PC-9 (cell line): ENCODE measurements at regions of chr22 and their contacts with region 1.

Region 1: GRCh38 chr22:36552289-36552688 is 23.3 kb upstream of the EIF3D start:
- DNase-seq: no peak
- H3K4me3 ChIP-seq: no peak overlapping the region
- H3K27ac ChIP-seq: no peak overlapping the region
- H3K4me1 ChIP-seq: peaks cover 4% of the 10 kb centered on the region
- H3K27me3 ChIP-seq: peaks cover 20% of the 10 kb centered on the region
- CTCF ChIP-seq: no peak

Region 2: DNA sequence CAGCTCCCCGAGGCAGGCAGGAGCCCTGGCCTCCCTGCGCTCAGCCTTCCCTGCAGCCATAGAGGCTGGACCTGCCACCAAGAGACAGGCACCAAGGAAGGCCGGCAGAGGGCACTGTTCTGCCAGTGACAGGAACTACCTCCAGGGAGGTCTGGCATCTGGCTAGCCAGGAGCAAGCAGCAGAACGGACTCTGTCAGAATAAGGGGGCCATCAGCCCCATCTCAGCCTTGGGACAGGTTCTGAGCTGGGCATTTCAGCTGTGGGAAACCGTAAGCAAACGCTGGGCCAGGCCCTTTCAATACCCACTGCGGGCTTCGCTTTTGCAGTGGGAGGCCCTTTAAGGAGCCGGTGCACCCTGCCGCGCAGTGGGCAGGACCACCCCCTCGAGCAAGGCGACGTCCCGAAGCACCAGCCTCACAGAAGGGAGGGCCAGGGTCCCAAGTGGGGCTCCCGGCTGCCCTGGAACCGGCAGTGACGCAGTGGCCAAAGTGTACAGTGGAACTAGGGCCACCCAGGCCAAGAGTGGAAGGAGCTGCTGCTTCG is 205.5 kb after region 1 on chr22:
- CTCF ChIA-PET with region 1: interaction called, 12 read pairs
- POLR2A ChIA-PET with region 1: no interaction called
- intact Hi-C with region 1: no loop called
- DNase-seq: peak; percentile 65 to 84
- H3K4me3 ChIP-seq: no peak overlapping the region
- H3K27ac ChIP-seq: no peak overlapping the region
- H3K4me1 ChIP-seq: peaks cover 6% of the 10 kb centered on the region
- H3K27me3 ChIP-seq: peaks cover 23% of the 10 kb centered on the region
- CTCF ChIP-seq: peak; percentile 97